Activated CD4-positive, alpha-beta T cell treated with anti-CD3 and anti-CD28 coated beads for 36 hours (primary cell): ENCODE measurements at regions of chr4 and their contacts with region 1.

Region 1: GRCh38 chr4:38804654-38805295 is at the start of gene TLR1:
- DNase-seq: no peak
- ATAC-seq: peak; percentile 82
- H3K4me3 Mint-ChIP-seq: peak within 1 kb of the TSS; percentile 64
- H3K27ac Mint-ChIP-seq: peak within 1 kb of the TSS; percentile 88
- H3K4me1 Mint-ChIP-seq: peaks cover 24% of the 10 kb centered on the region
- H3K27me3 Mint-ChIP-seq: no peaks in the 10 kb centered on the region
- total RNA-seq, gene TLR1: 1.5 to 1.7 TPM

Region 2: DNA sequence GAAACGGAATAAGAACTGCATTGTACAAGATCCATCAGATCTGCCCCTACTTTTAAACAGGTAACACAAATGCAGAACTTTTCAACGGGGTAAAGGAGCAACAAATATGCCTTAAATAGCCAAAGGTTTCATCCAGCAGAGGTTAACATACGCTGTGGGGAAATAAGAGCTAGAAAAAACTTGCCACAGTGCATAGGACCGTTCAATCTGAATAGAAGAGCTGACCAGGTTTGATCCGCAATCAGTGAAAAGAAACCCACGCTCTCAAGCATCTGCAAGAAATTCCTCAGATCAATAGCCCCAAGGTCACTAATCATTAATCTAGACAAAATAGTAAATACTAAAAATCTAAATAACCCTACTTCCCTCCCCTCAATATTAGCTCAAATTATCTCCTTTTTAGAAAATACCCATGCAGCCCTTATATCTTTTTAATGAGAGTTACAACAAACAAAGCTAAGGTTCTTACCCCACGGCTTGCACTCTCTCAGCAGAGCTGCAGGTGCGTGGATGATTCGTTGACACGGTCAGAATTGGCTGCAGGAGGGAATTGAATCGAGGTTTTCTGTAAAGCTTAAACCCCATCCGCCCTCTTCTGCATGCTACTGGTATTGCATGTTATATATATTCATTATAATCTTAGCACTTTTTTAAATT is 22.2 kb before region 1 on chr4 and contains the start of gene TLR10:
- CTCF ChIA-PET with region 1: interaction called, 36 read pairs
- POLR2A ChIA-PET with region 1: no interaction called
- intact Hi-C with region 1: no loop called
- DNase-seq: peak; percentile 37
- ATAC-seq: peak; percentile 63
- H3K4me3 Mint-ChIP-seq: no peak within 1 kb of the TSS
- H3K27ac Mint-ChIP-seq: no peak within 1 kb of the TSS
- H3K4me1 Mint-ChIP-seq: peaks cover 5% of the 10 kb centered on the region
- H3K27me3 Mint-ChIP-seq: no peaks in the 10 kb centered on the region
- total RNA-seq, gene TLR10: not detected

Region 3: DNA sequence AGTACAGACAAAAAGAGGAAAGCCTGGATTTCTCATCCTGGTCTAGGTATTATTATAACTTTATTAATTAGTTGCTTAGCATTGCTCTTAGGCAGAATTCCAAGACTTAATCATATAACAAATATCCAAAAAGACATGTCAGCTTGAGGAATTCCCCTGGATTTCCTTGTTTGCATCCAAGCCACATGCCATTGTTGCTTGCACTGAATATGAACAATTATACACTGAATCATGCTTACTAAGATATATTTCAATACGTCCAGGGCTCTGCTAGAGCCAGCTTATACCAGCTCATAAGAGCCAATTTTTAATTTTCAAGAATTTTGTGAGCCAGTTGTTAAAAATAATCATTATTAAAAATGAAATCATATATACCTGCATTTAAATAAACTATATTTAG is 16.4 kb before region 1 on chr4:
- CTCF ChIA-PET with region 1: interaction called, 36 read pairs
- POLR2A ChIA-PET with region 1: no interaction called
- intact Hi-C with region 1: no loop called
- DNase-seq: no peak
- ATAC-seq: no peak
- H3K4me3 Mint-ChIP-seq: no peak overlapping the region
- H3K27ac Mint-ChIP-seq: no peak overlapping the region
- H3K4me1 Mint-ChIP-seq: no peaks in the 10 kb centered on the region
- H3K27me3 Mint-ChIP-seq: no peaks in the 10 kb centered on the region

Region 4: DNA sequence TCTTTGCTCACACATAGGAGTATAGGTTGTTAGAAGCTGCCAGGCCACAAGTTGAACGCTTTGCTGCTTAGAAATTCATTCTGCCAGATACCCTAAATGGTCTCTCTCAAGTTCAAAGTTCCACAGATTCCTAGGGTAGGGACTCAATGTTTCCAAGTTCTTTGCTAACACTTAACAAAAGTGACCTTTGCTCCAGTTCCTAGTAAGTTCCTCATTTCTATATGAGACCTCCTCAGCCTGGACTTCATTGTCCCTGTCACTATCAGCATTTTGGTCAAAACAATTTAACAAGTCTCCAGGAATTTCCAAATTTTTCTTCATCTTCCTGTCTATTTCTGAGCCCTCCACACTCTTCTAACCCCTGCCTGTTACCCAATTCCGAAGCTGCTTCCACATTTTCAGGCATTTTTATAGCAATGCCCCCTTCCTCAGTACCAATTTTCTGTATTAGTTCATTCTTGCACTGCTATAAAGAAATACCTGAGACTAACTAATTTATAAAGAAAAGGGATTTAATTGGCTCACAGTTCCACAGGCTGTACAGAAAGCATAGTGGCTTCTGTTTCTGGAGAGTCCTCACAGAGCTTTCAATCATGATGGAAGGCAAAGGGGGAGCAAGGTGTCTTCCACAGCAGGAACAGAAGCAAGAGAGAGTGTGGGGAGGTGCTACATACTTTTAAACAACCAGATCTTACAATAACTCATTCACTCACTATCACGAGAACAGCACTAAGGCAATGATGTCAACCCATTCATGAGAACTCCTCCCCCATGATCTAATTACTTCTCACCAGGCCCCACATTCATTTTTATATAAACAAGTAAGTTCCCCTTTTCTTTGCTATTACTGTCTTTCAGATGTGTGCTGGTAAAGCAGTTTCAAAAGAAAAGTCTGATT is 11.4 kb after region 1 on chr4:
- CTCF ChIA-PET with region 1: interaction called, 14 read pairs
- POLR2A ChIA-PET with region 1: interaction called, 4 read pairs
- intact Hi-C with region 1: no loop called
- DNase-seq: no peak
- ATAC-seq: peak; percentile 39
- H3K4me3 Mint-ChIP-seq: no peak overlapping the region
- H3K27ac Mint-ChIP-seq: no peak overlapping the region
- H3K4me1 Mint-ChIP-seq: peaks cover 17% of the 10 kb centered on the region
- H3K27me3 Mint-ChIP-seq: no peaks in the 10 kb centered on the region

Region 5: GRCh38 chr4:38831653-38832052 is 26.9 kb after region 1 on chr4:
- CTCF ChIA-PET with region 1: interaction called, 10 read pairs
- POLR2A ChIA-PET with region 1: no interaction called
- intact Hi-C with region 1: no loop called
- DNase-seq: no peak
- ATAC-seq: no peak
- H3K4me3 Mint-ChIP-seq: no peak overlapping the region
- H3K27ac Mint-ChIP-seq: no peak overlapping the region
- H3K4me1 Mint-ChIP-seq: no peaks in the 10 kb centered on the region
- H3K27me3 Mint-ChIP-seq: no peaks in the 10 kb centered on the region

Region 6: GRCh38 chr4:39933671-39934590 is 1129.2 kb after region 1 on chr4:
- CTCF ChIA-PET with region 1: no interaction called
- POLR2A ChIA-PET with region 1: no interaction called
- intact Hi-C with region 1: no loop called
- DNase-seq: peak; percentile 19
- ATAC-seq: no peak
- H3K4me3 Mint-ChIP-seq: no peak overlapping the region
- H3K27ac Mint-ChIP-seq: peak overlapping the region; percentile 76
- H3K4me1 Mint-ChIP-seq: peaks cover 63% of the 10 kb centered on the region
- H3K27me3 Mint-ChIP-seq: no peaks in the 10 kb centered on the region